ENCODE measurements at regions of chr4 and their contacts with region 1.

Region 1: GRCh38 chr4:113394730-113395530 is 345.5 kb downstream of the ANK2 start:
- DNase-seq: no peak
- ATAC-seq: peak; percentile 94 to 100 (median 96)
- H3K4me3 ChIP-seq: no peak overlapping the region
- H3K27ac ChIP-seq: no peak overlapping the region
- H3K4me1 ChIP-seq: no peaks in the 10 kb centered on the region
- H3K27me3 ChIP-seq: no peaks in the 10 kb centered on the region
- CTCF ChIP-seq: peak; percentile 94

Region 2: GRCh38 chr4:113116414-113117357 is 278.2 kb before region 1 on chr4:
- intact Hi-C with region 1: no loop called
- DNase-seq: no peak
- ATAC-seq: no peak
- H3K4me3 ChIP-seq: no peak overlapping the region
- H3K27ac ChIP-seq: no peak overlapping the region
- H3K4me1 ChIP-seq: peaks cover 4% of the 10 kb centered on the region
- H3K27me3 ChIP-seq: no peaks in the 10 kb centered on the region
- CTCF ChIP-seq: no peak

Region 3: GRCh38 chr4:113316879-113317278 is 78.1 kb before region 1 on chr4:
- intact Hi-C with region 1: no loop called
- DNase-seq: no peak
- ATAC-seq: no peak
- H3K4me3 ChIP-seq: no peak overlapping the region
- H3K27ac ChIP-seq: no peak overlapping the region
- H3K4me1 ChIP-seq: no peaks in the 10 kb centered on the region
- H3K27me3 ChIP-seq: no peaks in the 10 kb centered on the region
- CTCF ChIP-seq: no peak

Region 4: GRCh38 chr4:113371111-113371510 is 23.8 kb before region 1 on chr4:
- intact Hi-C with region 1: no loop called
- DNase-seq: no peak
- ATAC-seq: no peak
- H3K4me3 ChIP-seq: no peak overlapping the region
- H3K27ac ChIP-seq: no peak overlapping the region
- H3K4me1 ChIP-seq: no peaks in the 10 kb centered on the region
- H3K27me3 ChIP-seq: no peaks in the 10 kb centered on the region
- CTCF ChIP-seq: no peak

Region 5: GRCh38 chr4:113445286-113445685 is 50.4 kb after region 1 on chr4:
- intact Hi-C with region 1: no loop called
- DNase-seq: peak; percentile 51 to 68
- ATAC-seq: peak; percentile 80 to 88 (median 85)
- H3K4me3 ChIP-seq: no peak overlapping the region
- H3K27ac ChIP-seq: peak overlapping the region; percentile 70
- H3K4me1 ChIP-seq: peaks cover 28% of the 10 kb centered on the region
- H3K27me3 ChIP-seq: no peaks in the 10 kb centered on the region
- CTCF ChIP-seq: no peak

Region 6: GRCh38 chr4:113539408-113539807 is 144.5 kb after region 1 on chr4:
- intact Hi-C with region 1: loop called in 1 of 2 experiments (anchors 10 kb)
- DNase-seq: no peak
- ATAC-seq: no peak
- H3K4me3 ChIP-seq: no peak overlapping the region
- H3K27ac ChIP-seq: no peak overlapping the region
- H3K4me1 ChIP-seq: peaks cover 50% of the 10 kb centered on the region
- H3K27me3 ChIP-seq: no peaks in the 10 kb centered on the region
- CTCF ChIP-seq: no peak

Region 7: GRCh38 chr4:113761620-113762185 is 366.8 kb after region 1 on chr4 and contains the start of gene CAMK2D:
- intact Hi-C with region 1: loop called in 1 of 2 experiments (anchors 2 kb)
- DNase-seq: peak; percentile 74 to 93
- ATAC-seq: peak; percentile 83 to 85 (median 84)
- H3K4me3 ChIP-seq: peak within 1 kb of the TSS; percentile 88
- H3K27ac ChIP-seq: peak within 1 kb of the TSS; percentile 97
- H3K4me1 ChIP-seq: peaks cover 28% of the 10 kb centered on the region
- H3K27me3 ChIP-seq: no peaks in the 10 kb centered on the region
- CTCF ChIP-seq: peak; percentile 42
- total RNA-seq, gene CAMK2D: 83.8 to 183 (median 145) TPM

Region 8: DNA sequence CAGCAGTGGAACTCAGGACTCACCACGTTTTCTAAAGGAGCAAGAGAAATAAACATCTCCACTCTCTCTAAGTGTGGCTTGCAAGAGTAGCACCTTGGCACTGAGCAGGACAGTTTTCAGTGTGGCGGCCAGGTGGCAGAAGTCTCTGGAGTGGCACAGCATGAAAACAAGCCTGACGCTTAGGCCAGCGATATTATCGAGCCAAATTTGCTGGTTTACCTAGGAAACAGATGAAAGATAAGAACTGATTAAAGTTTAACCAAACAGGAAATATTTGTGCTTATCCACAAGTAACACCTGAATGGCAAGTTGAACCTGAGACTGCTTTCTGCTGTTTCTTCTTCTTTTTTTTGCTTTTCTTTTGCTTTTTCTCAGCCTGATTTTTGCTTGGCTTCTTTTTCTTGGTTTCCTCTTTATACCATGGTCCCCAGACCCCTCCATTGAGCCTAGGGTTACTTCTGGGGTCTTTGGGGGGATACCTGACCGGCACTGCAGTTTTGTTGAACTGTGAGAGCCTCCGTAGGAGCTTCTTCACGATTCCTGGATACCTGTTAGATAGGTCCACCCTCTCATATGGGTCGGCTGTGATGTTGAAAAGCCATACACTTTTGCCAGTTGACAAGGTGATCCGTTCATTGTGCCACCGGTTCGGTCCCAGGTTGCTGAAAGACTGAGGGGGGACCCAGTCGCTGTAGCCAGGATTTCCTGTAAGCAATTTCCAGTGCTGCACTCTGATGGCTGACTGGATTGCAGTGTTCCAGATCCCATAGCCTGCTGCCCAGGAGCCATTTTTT is 507.3 kb after region 1 on chr4:
- intact Hi-C with region 1: loop called (anchors 5 to 10 kb)
- DNase-seq: no peak
- ATAC-seq: no peak
- H3K4me3 ChIP-seq: no peak overlapping the region
- H3K27ac ChIP-seq: no peak overlapping the region
- H3K4me1 ChIP-seq: no peaks in the 10 kb centered on the region
- H3K27me3 ChIP-seq: no peaks in the 10 kb centered on the region
- CTCF ChIP-seq: no peak

Region 9: GRCh38 chr4:113908829-113909228 is 513.9 kb after region 1 on chr4:
- intact Hi-C with region 1: loop called (anchors 5 to 10 kb)
- DNase-seq: no peak
- ATAC-seq: no peak
- H3K4me3 ChIP-seq: no peak overlapping the region
- H3K27ac ChIP-seq: no peak overlapping the region
- H3K4me1 ChIP-seq: no peaks in the 10 kb centered on the region
- H3K27me3 ChIP-seq: no peaks in the 10 kb centered on the region
- CTCF ChIP-seq: peak; percentile 26

Region 10: DNA sequence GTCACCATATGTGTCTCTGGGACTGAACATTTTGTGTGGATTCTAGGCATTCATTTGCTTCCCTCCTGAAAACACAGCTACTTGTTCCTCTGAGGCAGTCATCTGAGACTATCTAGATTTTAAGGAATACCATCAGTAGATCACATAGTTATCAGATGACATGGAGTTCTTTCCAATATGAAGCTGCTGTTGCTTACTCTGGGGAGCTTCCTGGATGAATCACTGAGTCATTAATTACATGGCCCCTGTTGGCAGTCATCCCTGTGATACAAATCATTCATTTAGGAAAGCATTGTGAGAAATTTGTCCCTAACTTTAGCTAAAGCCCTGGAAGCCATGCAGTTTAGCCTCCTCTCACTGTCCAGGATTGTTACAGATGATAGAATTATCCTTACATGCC is 682.7 kb after region 1 on chr4:
- intact Hi-C with region 1: loop called (anchors 5 to 10 kb)
- DNase-seq: no peak
- ATAC-seq: no peak
- H3K4me3 ChIP-seq: no peak overlapping the region
- H3K27ac ChIP-seq: no peak overlapping the region
- H3K4me1 ChIP-seq: no peaks in the 10 kb centered on the region
- H3K27me3 ChIP-seq: no peaks in the 10 kb centered on the region
- CTCF ChIP-seq: no peak

Region 11: DNA sequence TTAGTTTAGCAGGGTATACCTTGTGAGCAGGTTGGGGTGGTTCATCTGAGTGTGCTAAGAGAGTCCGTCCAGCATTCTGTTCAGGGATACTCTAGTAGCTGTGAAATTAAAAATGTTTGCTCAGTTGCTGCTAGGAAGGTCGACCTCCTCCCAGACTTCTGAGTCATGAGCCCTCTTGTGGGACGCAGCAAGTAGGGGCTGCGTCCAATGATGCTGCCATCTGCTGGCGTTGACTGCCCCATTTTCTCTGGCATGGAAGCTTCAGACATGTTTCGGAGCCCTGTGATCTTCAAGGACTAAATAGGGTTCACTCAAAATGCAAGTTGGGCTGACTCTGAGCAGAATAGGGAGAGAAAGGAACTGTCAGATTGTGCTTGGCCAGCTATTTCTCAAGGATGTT is 785.6 kb after region 1 on chr4:
- intact Hi-C with region 1: loop called in 1 of 2 experiments (anchors 10 kb)
- DNase-seq: no peak
- ATAC-seq: peak in 2 of 4 donors; percentile 33 to 57
- H3K4me3 ChIP-seq: no peak overlapping the region
- H3K27ac ChIP-seq: no peak overlapping the region
- H3K4me1 ChIP-seq: no peaks in the 10 kb centered on the region
- H3K27me3 ChIP-seq: no peaks in the 10 kb centered on the region
- CTCF ChIP-seq: peak; percentile 29

Measured in psoas muscle (tissue), 8 donors.